Breast epithelium (tissue), 4 donors: ENCODE measurements at regions of chr12 and their contacts with region 1.

Region 1: DNA sequence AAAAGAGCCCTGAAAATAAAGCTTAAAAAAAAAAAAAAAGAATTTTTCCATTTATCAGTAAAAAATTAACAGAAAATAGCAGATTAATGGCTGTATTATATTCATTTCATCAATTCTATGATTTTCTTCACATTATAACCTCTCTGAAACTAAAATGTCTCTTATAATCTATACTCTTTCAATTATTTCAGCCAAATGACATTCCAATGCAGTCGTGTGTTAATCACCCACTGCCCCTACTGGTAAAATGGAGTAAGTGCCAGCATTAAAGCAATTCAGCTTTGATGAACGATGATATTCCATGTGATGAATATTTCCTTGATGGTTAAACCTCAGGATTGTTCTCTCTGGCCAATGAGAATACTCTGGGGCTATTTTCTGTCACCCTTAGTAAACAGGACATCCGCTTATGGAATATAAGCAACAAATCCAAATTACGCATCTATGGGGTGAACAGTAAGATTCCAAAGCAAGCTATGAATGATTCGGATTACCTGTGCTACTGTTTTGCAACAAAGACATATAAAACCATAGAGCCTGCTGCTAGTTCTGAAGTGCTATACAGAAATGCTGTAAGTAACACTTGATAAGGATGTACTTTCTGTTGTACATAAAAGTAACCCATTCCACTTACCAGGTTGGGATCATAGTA is 20.3 kb upstream of the SYCP3 start:
- DNase-seq: no peak
- H3K4me3 ChIP-seq: no peak overlapping the region
- H3K27ac ChIP-seq: no peak overlapping the region
- H3K4me1 ChIP-seq: no peaks in the 10 kb centered on the region
- H3K27me3 ChIP-seq: no peaks in the 10 kb centered on the region
- CTCF ChIP-seq: peak; percentile 56 to 62 (median 60)
- POLR2A ChIP-seq: no peak

Region 2: GRCh38 chr12:101485021-101485420 is 274.5 kb before region 1 on chr12:
- intact Hi-C with region 1: no loop called
- DNase-seq: no peak
- H3K4me3 ChIP-seq: no peak overlapping the region
- H3K27ac ChIP-seq: no peak overlapping the region
- H3K4me1 ChIP-seq: no peaks in the 10 kb centered on the region
- H3K27me3 ChIP-seq: no peaks in the 10 kb centered on the region
- CTCF ChIP-seq: no peak
- POLR2A ChIP-seq: no peak

Region 3: GRCh38 chr12:101521136-101521535 is 238.4 kb before region 1 on chr12:
- intact Hi-C with region 1: no loop called
- DNase-seq: no peak
- H3K4me3 ChIP-seq: no peak overlapping the region
- H3K27ac ChIP-seq: no peak overlapping the region
- H3K4me1 ChIP-seq: no peaks in the 10 kb centered on the region
- H3K27me3 ChIP-seq: no peaks in the 10 kb centered on the region
- CTCF ChIP-seq: no peak
- POLR2A ChIP-seq: no peak

Region 4: DNA sequence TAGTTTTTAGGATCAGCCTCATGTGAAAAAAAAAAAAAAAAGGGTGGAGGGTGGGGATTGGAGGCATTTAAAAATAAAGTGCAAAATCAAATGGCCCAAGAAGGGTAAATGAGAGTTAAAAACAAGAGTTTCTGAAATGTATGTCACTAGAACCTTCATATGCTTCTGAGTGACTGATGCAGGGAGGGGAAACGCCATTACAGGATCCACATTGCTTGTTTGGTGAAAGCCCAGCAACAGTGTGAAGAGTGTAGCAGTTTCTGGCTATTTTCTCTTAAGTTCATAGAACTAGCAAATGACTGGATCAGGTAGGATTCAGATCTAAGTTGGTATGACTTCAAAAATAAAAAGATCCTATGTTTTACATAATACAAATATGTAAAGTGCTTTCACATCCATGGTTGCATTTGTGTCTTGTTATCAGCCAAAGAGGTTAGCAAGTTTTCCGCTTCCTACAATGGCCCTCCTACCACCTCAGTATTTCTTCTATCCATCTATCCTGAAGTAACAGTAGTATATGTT is 59.2 kb before region 1 on chr12:
- intact Hi-C with region 1: loop called (anchors 2 kb)
- DNase-seq: no peak
- H3K4me3 ChIP-seq: peak overlapping the region in 2 of 3 donors; percentile 83 to 99
- H3K27ac ChIP-seq: peak overlapping the region in 1 of 2 donors; percentile 62
- H3K4me1 ChIP-seq: peaks cover 0 to 3% of the 10 kb centered on the region in 2 donors
- H3K27me3 ChIP-seq: no peaks in the 10 kb centered on the region
- CTCF ChIP-seq: no peak
- POLR2A ChIP-seq: no peak

Region 5: GRCh38 chr12:101799774-101800173 is 40.3 kb after region 1 on chr12:
- intact Hi-C with region 1: no loop called
- DNase-seq: no peak
- H3K4me3 ChIP-seq: no peak overlapping the region
- H3K27ac ChIP-seq: no peak overlapping the region
- H3K4me1 ChIP-seq: no peaks in the 10 kb centered on the region
- H3K27me3 ChIP-seq: no peaks in the 10 kb centered on the region
- CTCF ChIP-seq: no peak
- POLR2A ChIP-seq: no peak